ENCODE measurements at regions of chr12 and their contacts with region 1.

Region 1: GRCh38 chr12:13546231-13546630 is 349.7 kb downstream of the EMP1 start:
- DNase-seq: no peak
- ATAC-seq: no peak
- H3K4me3 ChIP-seq: no peak overlapping the region
- H3K27ac ChIP-seq: no peak overlapping the region
- H3K4me1 ChIP-seq: no peaks in the 10 kb centered on the region
- H3K27me3 ChIP-seq: peaks cover 0 to 3% (median 0%) of the 10 kb centered on the region in 3 donors
- CTCF ChIP-seq: no peak

Region 2: GRCh38 chr12:13362260-13362841 is 183.9 kb before region 1 on chr12:
- intact Hi-C with region 1: loop called in 1 of 2 experiments (anchors 10 kb)
- DNase-seq: peak; percentile 50 to 57
- ATAC-seq: peak; percentile 68 to 93 (median 86)
- H3K4me3 ChIP-seq: no peak overlapping the region
- H3K27ac ChIP-seq: no peak overlapping the region
- H3K4me1 ChIP-seq: no peaks in the 10 kb centered on the region
- H3K27me3 ChIP-seq: peaks cover 0 to 3% (median 0%) of the 10 kb centered on the region in 3 donors
- CTCF ChIP-seq: peak; percentile 83

Region 3: GRCh38 chr12:14314801-14315200 is 768.6 kb after region 1 on chr12:
- intact Hi-C with region 1: no loop called
- DNase-seq: no peak
- ATAC-seq: no peak
- H3K4me3 ChIP-seq: no peak overlapping the region
- H3K27ac ChIP-seq: no peak overlapping the region
- H3K4me1 ChIP-seq: no peaks in the 10 kb centered on the region
- H3K27me3 ChIP-seq: no peaks in the 10 kb centered on the region
- CTCF ChIP-seq: no peak